ENCODE measurements at regions of chr5 and their contacts with region 1.

Region 1: DNA sequence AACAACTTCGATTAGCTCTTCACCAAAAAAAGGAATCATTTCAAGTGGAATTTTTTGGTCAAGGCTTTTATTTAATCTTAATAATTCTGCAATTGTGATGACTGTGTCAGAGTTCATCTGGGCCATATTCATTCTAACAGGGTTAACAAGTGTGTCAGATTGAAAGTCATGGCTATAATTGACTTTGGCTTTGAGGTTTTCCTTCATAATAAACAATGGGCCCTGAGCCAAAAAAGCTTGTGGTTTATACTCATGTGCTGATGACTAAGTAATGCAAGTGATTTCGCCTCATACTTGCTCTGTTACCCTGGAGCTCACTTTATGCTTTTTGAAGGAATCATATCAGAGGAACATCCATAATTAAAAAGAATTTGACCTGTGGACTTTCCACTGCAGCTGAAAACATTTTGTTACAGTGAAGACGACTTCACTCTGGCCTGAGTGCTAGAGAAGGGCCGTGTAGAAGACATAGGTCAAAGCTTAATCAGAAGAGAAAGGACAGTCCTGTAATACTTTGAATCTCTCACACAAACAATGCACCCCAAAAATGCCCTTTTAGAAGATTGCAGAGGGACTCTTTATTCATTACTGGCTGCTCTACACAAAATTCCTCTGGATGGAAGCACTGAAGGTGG is 101.7 kb downstream of the GDNF start:
- DNase-seq: peak; percentile 23
- CTCF ChIP-seq: no peak

Region 2: DNA sequence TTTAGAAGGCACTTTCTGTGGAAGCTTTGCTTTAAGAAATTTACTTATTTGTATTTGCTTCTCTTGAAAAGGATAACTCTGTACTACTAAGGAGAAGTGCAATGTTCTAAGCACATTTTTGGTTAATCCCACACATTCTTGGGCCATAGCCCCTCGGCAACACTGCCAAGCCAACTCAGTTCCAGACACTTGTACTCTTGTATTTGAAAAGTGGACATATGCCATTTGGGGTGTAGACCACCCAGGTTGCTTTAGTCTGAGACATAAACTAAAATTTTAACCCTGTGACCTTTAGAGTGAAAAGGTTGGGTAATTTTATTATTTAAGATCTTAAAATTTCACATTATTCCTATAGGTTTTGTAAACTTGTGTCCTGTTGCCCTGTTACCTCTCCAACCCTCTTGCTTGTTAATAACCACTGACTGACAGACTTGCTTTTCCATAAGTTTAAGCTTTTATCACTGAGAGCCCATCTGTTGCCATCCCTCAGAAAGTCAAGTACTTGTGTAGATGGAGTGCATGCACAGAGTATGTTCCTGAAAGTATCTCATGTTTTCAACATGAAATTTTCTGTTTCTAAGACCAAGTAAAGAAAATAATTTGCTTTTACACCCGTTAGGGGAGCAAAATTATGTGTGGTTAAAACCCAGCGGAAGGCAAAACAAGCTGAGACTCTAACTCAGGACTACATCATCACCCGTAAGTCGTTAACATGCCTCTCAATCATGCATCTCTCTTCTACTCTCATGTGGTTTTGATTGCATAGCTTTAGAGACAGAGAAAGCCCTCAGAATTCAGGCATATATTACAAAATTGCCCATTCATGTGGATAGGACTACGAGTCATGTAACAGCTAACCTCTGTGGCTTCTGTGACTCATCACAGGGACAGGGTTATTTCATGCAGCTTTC is 15.7 kb before region 1 on chr5:
- CTCF ChIA-PET with region 1: interaction called, 31 read pairs
- POLR2A ChIA-PET with region 1: no interaction called
- DNase-seq: peak; percentile 25
- CTCF ChIP-seq: no peak

Region 3: GRCh38 chr5:37751227-37751626 is 13.1 kb after region 1 on chr5:
- CTCF ChIA-PET with region 1: interaction called, 11 read pairs
- POLR2A ChIA-PET with region 1: no interaction called
- DNase-seq: no peak
- CTCF ChIP-seq: no peak